Activated T-helper 1 cell treated with anti-CD3 and anti-CD28 coated beads, Interleukin-12 subunit alpha, Interleukin-12 subunit beta, Interleukin-2, Interleukin-4 antibody, amounts not matched to agents 30 ng/mL and 10 ng/mL and 1 ng/mL, durations not matched to agents 14 hours and 24 hours and 36 hours (primary cell): ENCODE measurements at regions of chr6 and their contacts with region 1.

Region 1: DNA sequence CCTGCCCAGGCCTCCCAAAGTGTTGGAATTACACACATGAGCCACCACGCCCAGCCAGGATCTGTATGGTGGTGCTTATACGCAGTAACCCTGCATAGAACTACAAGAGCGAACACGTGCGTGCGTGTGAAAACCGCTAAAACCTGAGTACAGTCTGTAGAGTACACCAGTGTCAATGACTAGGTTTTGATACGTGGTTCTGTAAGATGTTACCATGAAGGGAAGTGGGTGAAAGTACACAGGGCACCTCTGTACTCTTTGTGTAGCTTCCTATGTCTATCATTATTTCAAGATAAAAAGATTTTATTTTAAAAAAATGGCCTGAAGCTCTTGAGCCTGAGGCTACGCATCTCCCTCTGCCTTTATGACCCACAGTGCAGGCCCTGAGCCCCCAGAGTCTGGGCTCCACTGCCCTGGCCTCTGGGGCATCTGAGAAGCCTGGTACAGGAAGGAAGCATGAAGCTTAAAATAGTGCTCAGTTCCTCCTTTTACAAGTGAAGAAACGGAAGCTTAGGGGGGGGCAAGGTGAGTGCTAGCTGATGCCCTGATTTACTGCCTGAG is 21.6 kb downstream of the LY86 start:
- DNase-seq: peak; percentile 35
- H3K4me3 Mint-ChIP-seq: no peak overlapping the region
- H3K27ac Mint-ChIP-seq: peak overlapping the region; percentile 72
- H3K4me1 Mint-ChIP-seq: peaks cover 67% of the 10 kb centered on the region
- H3K27me3 Mint-ChIP-seq: no peaks in the 10 kb centered on the region

Region 2: DNA sequence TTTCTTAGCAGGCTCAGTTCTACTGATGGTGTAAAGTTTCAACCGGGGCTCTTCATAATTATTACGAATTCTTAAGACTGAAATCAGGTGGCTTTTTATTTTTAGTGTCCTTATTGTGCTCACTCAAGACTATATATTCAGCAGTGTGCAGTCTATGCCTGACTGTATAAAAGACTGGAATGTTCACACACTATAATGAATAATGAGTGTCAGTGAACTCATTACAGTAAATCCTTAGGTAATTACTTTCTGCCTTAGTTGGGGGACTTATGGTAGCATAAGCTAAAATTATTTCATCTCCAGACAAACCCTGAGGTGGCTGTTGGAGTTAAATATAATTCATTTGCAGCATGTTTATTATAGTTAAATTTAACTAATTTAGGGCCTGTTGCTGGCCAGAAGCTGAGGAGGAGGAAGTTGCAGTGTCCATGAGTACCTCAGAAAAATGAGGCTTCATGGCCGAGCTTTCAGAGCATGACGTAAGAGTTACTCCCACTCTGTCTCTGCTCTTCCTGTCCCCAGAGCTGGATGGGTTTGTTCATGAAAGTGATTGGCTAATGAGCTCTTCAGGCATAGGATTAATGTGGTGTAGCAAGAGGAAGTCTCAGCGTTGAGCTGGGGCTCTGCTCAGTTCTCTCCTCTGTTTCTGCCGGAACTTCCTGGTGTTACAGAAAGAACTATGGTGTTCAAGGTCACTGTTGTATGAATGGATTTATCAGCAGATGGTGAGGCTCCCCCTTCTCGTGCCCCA is 939.1 kb before region 1 on chr6:
- intact Hi-C with region 1: no loop called
- DNase-seq: no peak
- H3K4me3 Mint-ChIP-seq: no peak overlapping the region
- H3K27ac Mint-ChIP-seq: no peak overlapping the region
- H3K4me1 Mint-ChIP-seq: peaks cover 38% of the 10 kb centered on the region
- H3K27me3 Mint-ChIP-seq: peaks cover 1% of the 10 kb centered on the region

Region 3: DNA sequence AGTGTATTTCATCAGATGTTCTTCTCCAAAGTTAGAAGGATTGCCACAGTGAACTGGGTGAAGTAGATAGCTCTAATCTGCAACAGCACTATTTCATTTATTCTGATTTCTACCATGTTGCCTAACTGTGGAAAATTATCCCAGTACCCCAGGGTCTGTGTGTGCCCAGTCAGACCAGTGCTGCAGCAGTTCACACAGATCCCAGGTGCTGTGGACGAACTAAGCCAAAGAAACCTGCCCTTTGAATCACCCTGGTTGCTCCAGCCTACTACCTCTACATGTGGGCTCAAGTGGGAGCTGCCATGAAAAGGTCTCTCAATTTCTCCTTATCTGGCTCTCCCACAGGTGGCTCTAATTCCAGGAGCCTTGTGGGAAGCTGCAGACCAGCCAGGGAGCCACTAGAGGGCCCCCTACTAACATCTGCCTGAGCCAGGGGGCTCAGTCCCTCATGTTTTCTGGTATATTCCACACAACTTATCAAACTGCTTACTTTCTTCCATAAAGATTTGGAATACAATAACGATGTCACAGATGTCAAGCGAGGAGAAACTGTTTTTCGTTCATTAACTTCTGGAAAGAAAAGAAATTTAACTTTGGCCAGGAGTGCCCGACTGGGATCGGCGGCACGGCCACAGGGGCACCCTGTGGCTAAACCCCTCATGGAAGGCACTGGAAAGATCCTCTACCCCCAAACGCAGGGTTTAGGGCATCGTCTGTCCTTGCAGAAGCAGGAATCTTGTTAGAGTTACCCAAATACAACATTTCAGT is 53.2 kb before region 1 on chr6:
- intact Hi-C with region 1: loop called (anchors 2 kb)
- DNase-seq: peak; percentile 15
- H3K4me3 Mint-ChIP-seq: no peak overlapping the region
- H3K27ac Mint-ChIP-seq: no peak overlapping the region
- H3K4me1 Mint-ChIP-seq: peaks cover 49% of the 10 kb centered on the region
- H3K27me3 Mint-ChIP-seq: peaks cover 16% of the 10 kb centered on the region

Region 4: DNA sequence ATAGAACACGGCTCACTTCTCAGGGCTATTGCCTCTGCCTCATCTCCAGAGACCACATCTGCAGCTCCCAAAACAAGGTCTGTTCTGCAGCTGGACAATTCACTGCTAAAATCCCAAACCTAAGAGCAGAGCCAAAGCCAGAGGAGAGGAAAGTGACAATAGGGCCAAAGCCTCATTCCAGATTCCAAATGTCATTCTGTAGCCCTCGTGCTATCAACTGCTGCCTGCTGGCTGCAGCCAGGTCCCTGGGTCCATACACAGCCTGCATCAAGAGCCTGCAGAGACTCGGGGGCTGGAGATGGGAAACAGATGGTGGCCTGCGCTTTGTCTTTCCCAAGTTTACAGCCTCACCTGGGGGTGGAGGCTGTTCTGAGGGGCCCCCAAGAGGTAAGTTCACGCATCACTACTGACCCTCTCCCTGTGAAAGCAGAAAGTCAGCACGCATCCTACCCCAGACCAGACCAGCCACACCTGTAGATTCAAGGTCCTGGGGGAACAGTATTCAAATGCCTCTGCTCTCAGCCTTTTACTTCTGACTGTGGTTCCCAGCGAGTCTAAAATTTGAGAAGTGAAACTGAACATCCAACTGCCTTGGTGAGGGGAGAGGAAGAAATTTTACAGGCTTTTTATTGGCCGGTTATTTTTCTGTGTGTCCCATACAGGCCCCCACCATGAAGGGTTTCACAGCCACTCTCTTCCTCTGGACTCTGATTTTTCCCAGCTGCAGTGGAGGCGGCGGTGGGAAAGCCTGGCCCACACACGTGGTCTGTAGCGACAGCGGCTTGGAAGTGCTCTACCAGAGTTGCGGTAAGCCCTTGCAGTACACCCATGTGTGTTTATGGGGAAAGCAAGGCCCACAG is 21.8 kb before region 1 on chr6 and contains the start of gene LY86:
- intact Hi-C with region 1: loop called (anchors 1 kb)
- DNase-seq: no peak
- H3K4me3 Mint-ChIP-seq: peak within 1 kb of the TSS; percentile 53
- H3K27ac Mint-ChIP-seq: peak within 1 kb of the TSS; percentile 65
- H3K4me1 Mint-ChIP-seq: peaks cover 85% of the 10 kb centered on the region
- H3K27me3 Mint-ChIP-seq: no peaks in the 10 kb centered on the region
- total RNA-seq, gene LY86: 1.1 and 1.2 TPM in 2 replicates